Ascending aorta (tissue), 2 donors: ENCODE measurements at regions of chr4 and their contacts with region 1.

Region 1: GRCh38 chr4:52712172-52712990 is 38.8 kb downstream of the ERVMER34-1 start:
- DNase-seq: peak; percentile 93 to 99
- H3K4me3 ChIP-seq: peak overlapping the region; percentile 85 to 86
- H3K27ac ChIP-seq: peak overlapping the region; percentile 91 to 93
- H3K4me1 ChIP-seq: peaks cover 9 to 16% of the 10 kb centered on the region in 2 donors
- H3K27me3 ChIP-seq: no peaks in the 10 kb centered on the region
- CTCF ChIP-seq: no peak

Region 2: GRCh38 chr4:51842554-51843308 is 869.6 kb before region 1 on chr4 and contains the start of gene DCUN1D4:
- intact Hi-C with region 1: loop called (anchors 5 kb)
- DNase-seq: peak; percentile 100
- H3K4me3 ChIP-seq: peak within 1 kb of the TSS; percentile 74 to 95
- H3K27ac ChIP-seq: peak within 1 kb of the TSS; percentile 94 to 98
- H3K4me1 ChIP-seq: peaks cover 0 to 7% of the 10 kb centered on the region in 2 donors
- H3K27me3 ChIP-seq: no peaks in the 10 kb centered on the region
- CTCF ChIP-seq: peak in 2 of 3 experiments; percentile 38 to 46
- total RNA-seq, gene DCUN1D4: 29.5 TPM

Region 3: GRCh38 chr4:52234561-52235440 is 477.6 kb before region 1 on chr4:
- intact Hi-C with region 1: loop called (anchors 10 kb)
- DNase-seq: no peak
- H3K4me3 ChIP-seq: peak overlapping the region; percentile 31 to 37
- H3K27ac ChIP-seq: no peak overlapping the region
- H3K4me1 ChIP-seq: peaks cover 0 to 5% of the 10 kb centered on the region in 2 donors
- H3K27me3 ChIP-seq: no peaks in the 10 kb centered on the region
- CTCF ChIP-seq: peak; percentile 43 to 71 (median 50)

Region 4: DNA sequence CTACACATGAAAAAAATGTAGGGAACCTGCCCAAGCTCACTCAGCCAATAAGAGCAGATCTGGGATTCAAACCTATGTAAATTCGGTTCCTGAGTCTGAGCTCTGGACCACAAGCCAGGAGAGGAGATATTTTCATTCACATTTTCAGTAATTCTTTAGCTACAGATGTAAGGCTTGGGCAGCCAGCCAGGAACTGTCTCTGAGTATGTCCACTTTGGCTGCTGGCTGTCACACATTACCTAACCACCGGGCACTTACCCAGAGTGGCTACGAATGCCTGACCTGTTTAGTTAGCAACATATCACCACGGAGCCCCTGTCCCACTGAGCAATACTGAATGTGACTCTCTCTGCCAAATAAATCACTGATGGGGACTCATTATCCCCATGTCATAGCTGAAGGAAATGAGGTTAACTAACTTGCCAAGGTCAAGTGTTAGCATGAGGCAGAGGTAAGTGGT is 68.6 kb before region 1 on chr4:
- intact Hi-C with region 1: loop called (anchors 5 kb)
- DNase-seq: peak; percentile 43 to 92
- H3K4me3 ChIP-seq: no peak overlapping the region
- H3K27ac ChIP-seq: peak overlapping the region; percentile 64 to 73
- H3K4me1 ChIP-seq: peaks cover 0 to 41% of the 10 kb centered on the region in 2 donors
- H3K27me3 ChIP-seq: no peaks in the 10 kb centered on the region
- CTCF ChIP-seq: no peak

Region 5: GRCh38 chr4:52788511-52789205 is 76.3 kb after region 1 on chr4:
- intact Hi-C with region 1: no loop called
- DNase-seq: no peak
- H3K4me3 ChIP-seq: no peak overlapping the region
- H3K27ac ChIP-seq: no peak overlapping the region
- H3K4me1 ChIP-seq: no peaks in the 10 kb centered on the region
- H3K27me3 ChIP-seq: no peaks in the 10 kb centered on the region
- CTCF ChIP-seq: no peak

Region 6: GRCh38 chr4:54064295-54065111 is 1352.1 kb after region 1 on chr4 and contains the start of gene CHIC2:
- intact Hi-C with region 1: loop called (anchors 10 kb)
- DNase-seq: peak; percentile 83 to 97
- H3K4me3 ChIP-seq: peak within 1 kb of the TSS; percentile 90 to 99
- H3K27ac ChIP-seq: peak within 1 kb of the TSS; percentile 94 to 96
- H3K4me1 ChIP-seq: peaks cover 0 to 36% of the 10 kb centered on the region in 2 donors
- H3K27me3 ChIP-seq: no peaks in the 10 kb centered on the region
- CTCF ChIP-seq: no peak
- total RNA-seq, gene CHIC2: 34.1 TPM